Psoas muscle (tissue), 8 donors: ENCODE measurements at regions of chr9 and their contacts with region 1.

Region 1: GRCh38 chr9:128587453-128587852 is 35.1 kb downstream of the SPTAN1 start:
- DNase-seq: no peak
- ATAC-seq: no peak
- H3K4me3 ChIP-seq: no peak overlapping the region
- H3K27ac ChIP-seq: no peak overlapping the region
- H3K4me1 ChIP-seq: no peaks in the 10 kb centered on the region
- H3K27me3 ChIP-seq: no peaks in the 10 kb centered on the region
- CTCF ChIP-seq: no peak

Region 2: DNA sequence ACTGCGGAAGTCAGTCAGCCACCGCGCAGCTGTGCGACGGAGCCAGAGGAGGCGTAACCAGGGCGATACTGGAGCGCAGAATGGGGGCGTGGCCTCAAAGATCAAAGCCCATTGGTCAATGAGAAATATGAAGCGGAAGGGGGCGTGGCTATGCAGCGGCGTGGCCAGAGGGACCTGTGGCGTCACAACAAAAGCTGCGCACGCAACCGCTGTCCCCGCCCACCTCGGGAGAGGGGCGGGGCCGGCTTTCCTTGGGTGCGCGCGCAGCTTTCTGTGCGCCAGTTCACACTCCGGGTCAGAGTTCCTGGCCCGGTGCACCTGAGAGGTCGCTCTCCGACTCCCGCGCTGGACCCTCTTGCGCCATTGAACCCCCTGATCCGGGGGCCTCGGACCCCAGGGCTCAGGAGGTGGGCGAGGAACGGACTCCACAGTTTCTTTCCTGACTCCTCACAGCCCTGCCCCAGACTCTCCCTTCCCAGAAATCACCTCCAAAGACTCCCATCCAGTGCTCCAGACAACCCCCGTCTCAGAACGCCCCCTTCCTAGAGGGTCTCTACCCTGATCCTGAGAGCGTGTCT is 311.4 kb before region 1 on chr9 and contains the starts of genes GOLGA2 and SWI5:
- intact Hi-C with region 1: no loop called
- DNase-seq: peak; percentile 100
- ATAC-seq: peak; percentile 97 to 99 (median 98)
- H3K4me3 ChIP-seq: peak within 1 kb of the TSS; percentile 97
- H3K27ac ChIP-seq: peak within 1 kb of the TSS; percentile 86
- H3K4me1 ChIP-seq: peaks cover 19% of the 10 kb centered on the region
- H3K27me3 ChIP-seq: no peaks in the 10 kb centered on the region
- CTCF ChIP-seq: no peak
- total RNA-seq, gene GOLGA2: 63.5 to 85.3 (median 76.7) TPM
- total RNA-seq, gene SWI5: 10.0 to 24.7 (median 13.0) TPM

Region 3: DNA sequence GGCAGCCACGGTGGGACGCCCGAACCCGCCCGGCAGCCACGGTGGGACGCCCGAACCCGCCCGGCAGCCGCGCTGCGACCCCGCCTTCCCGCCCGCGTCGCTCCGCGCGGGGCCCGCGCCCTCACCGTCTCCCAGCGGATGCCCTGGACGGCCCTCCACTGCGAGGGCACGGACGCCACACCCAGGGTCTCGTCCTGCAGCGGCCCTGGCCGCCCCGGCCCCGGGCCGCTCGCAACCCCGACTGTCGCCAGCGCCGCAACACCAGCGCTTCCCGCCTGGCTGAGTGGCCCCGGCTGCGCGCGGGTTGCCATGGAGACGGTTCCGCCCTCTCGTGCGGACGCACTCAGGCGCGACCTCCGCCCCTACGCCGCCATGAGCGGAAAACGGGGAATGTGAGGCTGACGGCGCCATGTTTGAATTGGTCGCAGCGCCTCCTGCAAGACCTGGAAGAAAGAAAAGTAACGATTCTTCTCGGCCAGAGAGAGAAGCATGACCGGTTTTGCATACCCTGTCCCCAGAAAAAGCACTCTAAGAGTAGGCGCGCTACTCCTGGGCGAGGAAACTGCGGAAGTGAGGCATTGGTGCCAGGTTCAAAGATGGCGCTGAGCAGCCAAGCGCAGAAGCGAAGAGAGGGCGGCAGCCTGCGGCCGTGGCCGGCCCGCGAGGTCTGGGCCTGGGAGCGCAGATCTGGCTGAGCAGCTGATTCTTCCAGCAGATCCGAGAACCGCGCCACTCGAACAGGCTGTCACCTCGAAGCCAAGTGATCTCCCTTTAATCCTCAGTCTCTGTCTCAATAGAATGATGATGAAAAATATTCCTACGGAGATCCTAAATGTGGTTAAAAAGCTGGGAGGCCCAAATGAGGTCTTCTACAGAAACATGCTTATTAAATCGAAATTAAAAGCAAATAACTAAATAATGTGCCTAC is 69.2 kb after region 1 on chr9 and contains the start of gene DYNC2I2:
- intact Hi-C with region 1: no loop called
- DNase-seq: peak; percentile 97 to 99
- ATAC-seq: peak; percentile 99 to 100 (median 100)
- H3K4me3 ChIP-seq: peak within 1 kb of the TSS; percentile 82
- H3K27ac ChIP-seq: peak within 1 kb of the TSS; percentile 94
- H3K4me1 ChIP-seq: no peaks in the 10 kb centered on the region
- H3K27me3 ChIP-seq: no peaks in the 10 kb centered on the region
- CTCF ChIP-seq: no peak
- total RNA-seq, gene DYNC2I2: 6.3 to 10.3 (median 8.6) TPM

Region 4: DNA sequence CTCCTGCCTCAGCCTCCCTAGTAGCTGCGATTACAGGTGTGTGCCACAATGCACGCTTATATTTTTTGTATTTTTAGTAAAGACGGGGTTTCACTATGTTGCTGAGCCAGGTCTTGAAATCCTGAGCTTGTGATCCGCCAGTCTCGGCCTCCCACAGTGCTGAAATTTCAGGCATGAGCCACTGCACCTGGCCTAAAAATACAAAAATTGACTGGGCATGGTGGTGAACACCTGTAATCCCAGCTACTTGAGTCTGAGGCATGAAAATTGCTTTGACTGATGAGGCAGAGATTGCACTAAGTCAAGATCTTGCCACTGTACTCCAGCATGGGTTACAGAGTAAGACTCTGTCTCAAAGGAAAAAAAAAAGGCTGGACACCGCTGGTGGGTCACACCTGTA is 82.3 kb after region 1 on chr9:
- intact Hi-C with region 1: no loop called
- DNase-seq: no peak
- ATAC-seq: no peak
- H3K4me3 ChIP-seq: no peak overlapping the region
- H3K27ac ChIP-seq: no peak overlapping the region
- H3K4me1 ChIP-seq: no peaks in the 10 kb centered on the region
- H3K27me3 ChIP-seq: no peaks in the 10 kb centered on the region
- CTCF ChIP-seq: no peak

Region 5: GRCh38 chr9:128969491-128969890 is 382.0 kb after region 1 on chr9:
- intact Hi-C with region 1: loop called in 1 of 2 experiments (anchors 10 kb)
- DNase-seq: no peak
- ATAC-seq: no peak
- H3K4me3 ChIP-seq: no peak overlapping the region
- H3K27ac ChIP-seq: no peak overlapping the region
- H3K4me1 ChIP-seq: no peaks in the 10 kb centered on the region
- H3K27me3 ChIP-seq: no peaks in the 10 kb centered on the region
- CTCF ChIP-seq: no peak

Region 6: DNA sequence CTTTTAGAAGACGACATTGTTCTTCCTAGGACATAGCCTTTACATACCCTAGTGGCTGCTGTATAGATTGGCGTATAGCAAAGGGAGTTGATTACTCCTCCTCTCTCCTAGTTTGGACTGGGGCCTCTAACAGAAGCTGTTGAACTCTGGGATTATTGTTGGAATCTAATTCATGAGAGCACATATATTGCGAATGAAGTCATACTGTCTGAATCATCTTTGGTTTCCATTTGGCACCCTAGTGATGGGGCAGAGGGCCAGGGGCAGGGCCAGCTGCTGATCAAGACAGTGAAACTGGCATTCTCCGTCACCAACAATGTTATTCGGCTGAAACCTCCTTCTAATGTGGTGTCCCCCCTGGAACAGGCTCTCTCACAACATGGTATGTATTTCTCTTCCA is 400.4 kb after region 1 on chr9:
- intact Hi-C with region 1: loop called in 1 of 2 experiments (anchors 10 kb)
- DNase-seq: peak; percentile 67 to 86
- ATAC-seq: peak; percentile 94 to 97 (median 96)
- H3K4me3 ChIP-seq: peak overlapping the region; percentile 13
- H3K27ac ChIP-seq: peak overlapping the region; percentile 71
- H3K4me1 ChIP-seq: peaks cover 14% of the 10 kb centered on the region
- H3K27me3 ChIP-seq: no peaks in the 10 kb centered on the region
- CTCF ChIP-seq: no peak